ENCODE measurements at regions of chr10 and their contacts with region 1.

Region 1: DNA sequence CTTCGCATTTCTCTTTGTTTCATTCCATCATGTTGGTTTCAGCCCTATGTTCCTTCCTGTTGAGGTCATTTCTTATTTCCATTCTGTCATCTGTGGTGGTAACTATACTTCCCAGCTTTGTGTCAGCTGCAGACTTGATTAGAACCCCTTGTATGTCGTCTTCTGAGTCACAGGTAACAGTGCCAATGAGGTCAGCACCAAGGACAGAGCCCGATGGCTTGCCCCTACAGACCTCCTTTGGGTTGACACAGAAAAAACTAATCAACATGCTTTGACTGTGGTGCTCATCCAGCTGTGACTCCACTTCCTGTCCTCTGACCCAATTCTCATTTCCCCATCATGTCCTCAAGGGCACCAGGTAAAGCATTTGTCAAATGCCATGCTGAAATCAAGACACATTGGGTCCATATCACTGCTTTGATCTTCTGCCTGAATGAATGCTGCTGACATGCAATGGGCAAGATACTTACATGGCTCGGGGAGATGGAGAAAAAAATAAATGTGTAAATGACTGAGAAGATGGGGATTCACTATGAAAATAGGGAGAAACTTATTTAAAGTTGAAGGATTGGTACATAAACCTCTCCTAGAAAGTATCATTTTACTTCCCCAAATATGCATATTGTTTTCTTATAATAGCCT is 25.6 kb upstream of the CRTAC1 start:
- DNase-seq: peak in 1 of 2 experiments; percentile 53
- H3K4me3 ChIP-seq: no peak overlapping the region
- H3K4me3 Mint-ChIP-seq: no peak overlapping the region
- H3K27ac Mint-ChIP-seq: no peak overlapping the region
- H3K4me1 ChIP-seq: no peaks in the 10 kb centered on the region
- H3K4me1 Mint-ChIP-seq: no peaks in the 10 kb centered on the region
- H3K27me3 ChIP-seq: no peaks in the 10 kb centered on the region; the same call in 1 of the 2 replicates
- H3K27me3 Mint-ChIP-seq: peaks cover 14% of the 10 kb centered on the region
- CTCF ChIP-seq: no peak

Region 2: GRCh38 chr10:97640174-97640867 is 415.7 kb before region 1 on chr10 and contains the start of gene PI4K2A:
- CTCF ChIA-PET with region 1: no interaction called
- POLR2A ChIA-PET with region 1: no interaction called
- intact Hi-C with region 1: no loop called
- DNase-seq: peak; percentile 99
- H3K4me3 ChIP-seq: peak within 1 kb of the TSS; percentile 82
- H3K4me3 Mint-ChIP-seq: peak within 1 kb of the TSS; percentile 99
- H3K27ac Mint-ChIP-seq: peak within 1 kb of the TSS; percentile 94
- H3K4me1 ChIP-seq: peaks cover 6% of the 10 kb centered on the region; the same call in 1 of the 2 replicates
- H3K4me1 Mint-ChIP-seq: peaks cover 12% of the 10 kb centered on the region
- H3K27me3 ChIP-seq: no peaks in the 10 kb centered on the region
- H3K27me3 Mint-ChIP-seq: no peaks in the 10 kb centered on the region
- CTCF ChIP-seq: no peak
- total RNA-seq, gene PI4K2A: 26.1 and 27.3 TPM in 2 replicates

Region 3: GRCh38 chr10:98028168-98028770 is 27.7 kb before region 1 on chr10:
- CTCF ChIA-PET with region 1: no interaction called
- POLR2A ChIA-PET with region 1: no interaction called
- intact Hi-C with region 1: no loop called
- DNase-seq: peak in 1 of 2 experiments; percentile 32
- H3K4me3 ChIP-seq: no peak overlapping the region
- H3K4me3 Mint-ChIP-seq: no peak overlapping the region
- H3K27ac Mint-ChIP-seq: no peak overlapping the region
- H3K4me1 ChIP-seq: no peaks in the 10 kb centered on the region
- H3K4me1 Mint-ChIP-seq: no peaks in the 10 kb centered on the region
- H3K27me3 ChIP-seq: 0 out of 2 replicates have a peak, but pooled peaks cover 2% of the 10 kb centered on the region
- H3K27me3 Mint-ChIP-seq: peaks cover 33% of the 10 kb centered on the region
- CTCF ChIP-seq: peak; percentile 44 to 50

Region 4: DNA sequence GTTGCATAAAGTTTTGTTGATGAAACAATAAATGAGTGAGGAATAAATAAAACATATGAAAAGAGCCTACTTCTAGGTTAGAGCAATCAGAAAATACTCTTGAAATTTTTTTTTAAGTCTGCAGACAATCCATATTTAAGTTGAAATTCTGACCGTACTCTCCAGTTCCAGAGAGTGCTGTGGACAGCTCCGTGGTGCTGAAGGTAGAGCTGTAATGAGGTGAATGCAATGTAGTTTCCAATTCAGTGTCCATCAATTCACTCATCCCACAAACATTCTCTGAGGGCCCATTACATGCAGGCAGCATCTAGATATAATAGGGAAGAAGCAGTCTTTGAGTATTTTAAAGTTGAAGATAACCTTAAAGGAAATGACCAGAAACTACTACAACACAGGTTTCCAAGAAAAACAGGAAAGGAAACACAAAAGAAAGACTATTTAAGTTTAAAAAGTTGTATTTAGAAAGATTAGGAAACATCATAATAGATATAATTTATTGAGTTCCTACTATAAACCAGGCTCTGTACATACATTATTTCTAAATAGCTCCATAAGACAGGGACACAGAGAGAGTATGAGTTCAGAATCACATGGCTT is 18.4 kb after region 1 on chr10:
- CTCF ChIA-PET with region 1: no interaction called
- POLR2A ChIA-PET with region 1: no interaction called
- intact Hi-C with region 1: loop called (anchors 1 kb)
- DNase-seq: peak in 1 of 2 experiments; percentile 47
- H3K4me3 ChIP-seq: no peak overlapping the region
- H3K4me3 Mint-ChIP-seq: no peak overlapping the region
- H3K27ac Mint-ChIP-seq: no peak overlapping the region
- H3K4me1 ChIP-seq: no peaks in the 10 kb centered on the region
- H3K4me1 Mint-ChIP-seq: no peaks in the 10 kb centered on the region
- H3K27me3 ChIP-seq: no peaks in the 10 kb centered on the region; the same call in 1 of the 2 replicates
- H3K27me3 Mint-ChIP-seq: peaks cover 12% of the 10 kb centered on the region
- CTCF ChIP-seq: no peak

Measured in Caco-2 (cell line).